Activated CD8-positive, alpha-beta memory T cell treated with anti-CD3 and anti-CD28 coated beads, Interleukin-2, amount 10 ng/mL, durations not matched to agents 7 days and 5 days (primary cell): ENCODE measurements at regions of chr5 and their contacts with region 1.

Region 1: DNA sequence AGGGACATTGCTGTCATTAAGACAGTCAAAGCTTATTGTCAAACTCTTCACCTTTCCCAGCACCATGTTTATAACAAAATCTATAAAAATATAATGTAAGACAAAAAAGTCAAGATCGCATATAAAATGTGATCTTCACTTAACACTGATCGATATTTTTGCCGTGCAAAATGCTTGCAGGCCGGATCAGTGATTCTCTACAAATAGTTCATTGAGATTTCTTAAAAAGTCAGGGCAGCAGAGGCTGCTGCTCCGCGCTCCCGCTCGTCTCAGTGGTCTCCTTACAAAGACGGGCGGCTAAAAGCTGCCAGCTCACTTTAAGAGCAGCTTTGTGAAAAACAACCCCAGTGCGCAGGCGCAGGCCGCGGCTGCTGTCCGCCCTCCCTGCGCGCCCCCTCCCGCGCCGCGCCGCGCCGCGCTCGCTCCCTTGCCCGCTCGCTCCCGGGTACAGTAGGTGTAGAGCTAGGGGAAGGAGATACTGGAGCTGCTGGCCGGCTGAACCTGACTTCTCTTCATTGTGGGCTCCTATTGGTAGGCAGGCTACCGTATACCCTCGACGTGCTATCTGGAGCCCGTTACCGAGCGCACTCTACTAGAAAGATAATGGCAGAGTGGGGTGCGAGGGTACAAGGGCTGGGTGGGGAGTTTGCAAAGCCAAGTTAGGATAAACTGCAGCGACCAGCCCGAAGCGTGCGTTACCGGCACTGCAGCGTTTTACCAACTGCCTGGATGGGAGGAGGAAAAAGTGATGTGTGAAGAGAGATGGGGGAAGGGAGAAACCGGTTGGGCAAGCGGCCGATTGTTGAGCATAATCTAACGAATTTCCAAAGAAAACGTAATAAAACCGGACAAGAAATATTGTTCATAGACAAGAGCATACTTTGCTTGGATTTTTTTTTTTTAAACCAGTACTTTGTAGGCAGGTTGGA is at the start of gene ARRDC3:
- DNase-seq: peak; percentile 98
- ATAC-seq: peak; percentile 61
- H3K4me3 Mint-ChIP-seq: peak within 1 kb of the TSS; percentile 88
- H3K27ac Mint-ChIP-seq: peak within 1 kb of the TSS; percentile 100
- H3K4me1 Mint-ChIP-seq: peaks cover 24% of the 10 kb centered on the region
- H3K27me3 Mint-ChIP-seq: no peaks in the 10 kb centered on the region
- total RNA-seq, gene ARRDC3: 13.5 to 42.8 TPM

Region 2: DNA sequence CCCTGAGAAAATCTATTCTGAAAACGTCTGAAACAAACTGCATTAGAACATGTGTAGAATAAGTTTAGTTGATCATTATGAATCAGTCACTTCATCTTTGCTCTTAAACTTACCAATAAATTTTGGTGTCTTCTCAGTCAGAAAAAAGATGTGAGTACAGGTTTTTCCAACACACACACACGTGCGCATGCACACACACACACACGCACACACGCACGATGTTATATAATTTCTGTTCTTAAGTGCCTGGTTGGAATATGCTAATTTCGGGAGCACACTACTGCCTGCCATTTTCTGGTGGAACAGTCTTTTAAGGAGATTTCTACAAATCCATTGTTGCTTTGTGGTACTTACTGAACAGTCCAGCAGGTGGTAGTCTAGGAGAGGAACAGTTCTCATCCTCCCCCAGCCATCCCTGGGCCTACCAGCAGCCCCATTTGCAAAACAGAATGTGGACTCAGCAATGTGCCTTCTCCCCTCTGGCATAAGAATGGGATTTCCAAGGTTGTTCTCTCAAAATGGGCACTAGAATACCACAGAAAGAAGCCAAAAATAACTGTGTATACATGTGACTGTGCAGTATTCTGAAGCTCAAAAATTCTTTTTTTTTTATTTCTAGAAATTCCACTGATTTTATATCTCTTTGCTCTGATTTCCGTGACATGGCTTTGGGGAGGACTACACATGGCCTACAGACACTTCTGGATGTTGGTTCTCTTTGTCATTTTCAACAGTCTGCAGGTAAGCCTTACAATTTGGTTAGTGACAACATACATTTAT is 281.5 kb before region 1 on chr5:
- CTCF ChIA-PET with region 1: interaction called, 21 read pairs
- DNase-seq: peak; percentile 71
- ATAC-seq: peak; percentile 94
- H3K4me3 Mint-ChIP-seq: no peak overlapping the region
- H3K27ac Mint-ChIP-seq: no peak overlapping the region
- H3K4me1 Mint-ChIP-seq: no peaks in the 10 kb centered on the region
- H3K27me3 Mint-ChIP-seq: peaks cover 20% of the 10 kb centered on the region

Region 3: DNA sequence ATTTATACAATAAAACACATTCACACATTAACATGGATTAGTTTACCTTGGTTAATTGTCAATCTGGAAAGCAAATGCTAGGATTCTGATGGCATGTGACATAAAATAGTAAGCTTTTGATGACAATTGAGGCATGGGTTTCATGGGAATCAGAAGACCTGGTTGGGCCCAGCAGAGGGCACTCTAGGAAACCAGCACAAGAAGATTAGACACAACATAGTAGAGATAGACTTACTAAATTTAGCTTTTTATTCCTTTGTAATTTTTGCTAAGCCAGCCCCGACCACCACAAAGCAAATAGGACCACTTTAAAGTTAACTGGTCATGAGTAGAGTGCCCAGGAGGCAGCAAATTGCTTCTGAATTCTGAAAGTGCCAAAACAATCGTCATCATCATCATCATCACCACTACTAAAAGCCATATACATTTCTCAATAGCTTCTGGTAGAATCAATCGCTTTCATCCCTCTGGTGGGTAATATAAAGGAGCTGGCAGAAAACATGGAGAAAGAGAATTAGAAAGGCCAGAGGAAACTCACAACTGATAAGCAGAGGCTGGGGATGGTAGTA is 163.4 kb before region 1 on chr5:
- CTCF ChIA-PET with region 1: interaction called, 163 read pairs
- DNase-seq: peak; percentile 44
- ATAC-seq: peak; percentile 60
- H3K4me3 Mint-ChIP-seq: no peak overlapping the region
- H3K27ac Mint-ChIP-seq: no peak overlapping the region
- H3K4me1 Mint-ChIP-seq: no peaks in the 10 kb centered on the region
- H3K27me3 Mint-ChIP-seq: peaks cover 9% of the 10 kb centered on the region

Region 4: GRCh38 chr5:91245871-91246270 is 137.4 kb before region 1 on chr5:
- CTCF ChIA-PET with region 1: interaction called, 28 read pairs
- DNase-seq: no peak
- ATAC-seq: no peak
- H3K4me3 Mint-ChIP-seq: no peak overlapping the region
- H3K27ac Mint-ChIP-seq: no peak overlapping the region
- H3K4me1 Mint-ChIP-seq: no peaks in the 10 kb centered on the region
- H3K27me3 Mint-ChIP-seq: peaks cover 4% of the 10 kb centered on the region

Region 5: DNA sequence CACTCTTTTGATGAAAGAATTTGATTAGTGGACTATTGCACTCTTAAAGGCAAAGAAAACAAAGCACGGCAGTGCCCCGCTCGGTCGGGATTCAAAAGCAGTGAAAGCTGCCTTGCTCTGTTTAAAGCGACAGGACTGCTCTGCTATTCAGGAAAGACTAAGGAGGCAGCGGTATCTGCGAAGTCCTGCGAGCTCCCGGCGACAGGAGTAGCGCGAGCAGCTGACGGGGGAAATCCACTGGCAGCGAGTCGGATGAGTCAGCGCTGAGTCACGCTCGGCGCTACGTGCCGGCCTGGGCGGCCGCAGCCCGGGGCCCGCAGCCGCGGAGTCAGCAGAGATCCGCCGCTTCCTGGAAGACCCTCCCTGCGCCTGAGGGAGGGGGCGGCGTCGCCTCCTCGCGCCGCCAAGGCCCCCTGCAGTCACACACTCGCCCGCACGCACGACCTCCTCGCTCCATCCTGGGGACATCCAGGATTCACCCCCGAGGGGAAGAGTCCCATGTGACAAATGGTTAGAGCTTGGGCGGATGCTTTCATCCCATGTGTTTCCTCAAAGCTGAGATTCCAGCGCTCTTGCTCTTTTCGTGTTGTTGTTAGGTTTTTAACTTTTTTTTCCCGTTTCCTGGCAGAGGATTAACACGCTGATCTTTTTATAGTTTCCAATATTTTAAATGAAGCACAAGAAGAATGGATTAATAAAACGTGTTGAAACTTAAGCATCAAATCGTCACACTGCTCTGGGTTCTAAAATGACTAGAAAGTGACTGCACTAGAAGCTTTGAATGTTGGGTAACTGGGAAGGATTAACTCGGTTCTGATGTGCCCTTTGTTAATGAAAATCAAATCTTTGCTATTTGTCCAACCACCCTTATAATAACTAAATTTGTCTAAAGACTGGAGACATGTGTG is 102.7 kb before region 1 on chr5:
- CTCF ChIA-PET with region 1: interaction called, 28 read pairs
- DNase-seq: peak; percentile 92
- ATAC-seq: peak; percentile 96
- H3K4me3 Mint-ChIP-seq: peak overlapping the region; percentile 83
- H3K27ac Mint-ChIP-seq: peak overlapping the region; percentile 96
- H3K4me1 Mint-ChIP-seq: peaks cover 27% of the 10 kb centered on the region
- H3K27me3 Mint-ChIP-seq: peaks cover 5% of the 10 kb centered on the region

Region 6: DNA sequence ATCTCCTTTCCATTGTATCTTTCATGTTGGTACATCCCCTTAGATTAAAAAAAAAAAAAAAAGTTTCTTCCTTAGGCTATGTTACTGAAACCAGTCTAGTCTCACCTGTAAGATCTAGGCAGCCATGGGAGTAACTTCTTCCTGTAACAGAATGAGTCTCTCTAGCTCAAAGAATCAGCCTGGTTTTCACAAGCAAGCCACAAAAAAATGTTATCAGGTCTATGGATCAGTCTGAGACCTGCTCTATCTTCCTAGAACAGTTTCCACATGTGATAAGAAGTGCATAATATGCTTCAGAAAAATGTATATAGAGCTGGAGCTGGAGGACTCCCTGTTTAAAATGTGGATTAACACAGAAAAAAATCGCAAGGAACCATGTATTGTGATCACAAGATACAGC is 54.0 kb before region 1 on chr5:
- CTCF ChIA-PET with region 1: interaction called, 11 read pairs
- DNase-seq: no peak
- ATAC-seq: peak; percentile 66
- H3K4me3 Mint-ChIP-seq: no peak overlapping the region
- H3K27ac Mint-ChIP-seq: no peak overlapping the region
- H3K4me1 Mint-ChIP-seq: peaks cover 34% of the 10 kb centered on the region
- H3K27me3 Mint-ChIP-seq: peaks cover 8% of the 10 kb centered on the region

Region 7: DNA sequence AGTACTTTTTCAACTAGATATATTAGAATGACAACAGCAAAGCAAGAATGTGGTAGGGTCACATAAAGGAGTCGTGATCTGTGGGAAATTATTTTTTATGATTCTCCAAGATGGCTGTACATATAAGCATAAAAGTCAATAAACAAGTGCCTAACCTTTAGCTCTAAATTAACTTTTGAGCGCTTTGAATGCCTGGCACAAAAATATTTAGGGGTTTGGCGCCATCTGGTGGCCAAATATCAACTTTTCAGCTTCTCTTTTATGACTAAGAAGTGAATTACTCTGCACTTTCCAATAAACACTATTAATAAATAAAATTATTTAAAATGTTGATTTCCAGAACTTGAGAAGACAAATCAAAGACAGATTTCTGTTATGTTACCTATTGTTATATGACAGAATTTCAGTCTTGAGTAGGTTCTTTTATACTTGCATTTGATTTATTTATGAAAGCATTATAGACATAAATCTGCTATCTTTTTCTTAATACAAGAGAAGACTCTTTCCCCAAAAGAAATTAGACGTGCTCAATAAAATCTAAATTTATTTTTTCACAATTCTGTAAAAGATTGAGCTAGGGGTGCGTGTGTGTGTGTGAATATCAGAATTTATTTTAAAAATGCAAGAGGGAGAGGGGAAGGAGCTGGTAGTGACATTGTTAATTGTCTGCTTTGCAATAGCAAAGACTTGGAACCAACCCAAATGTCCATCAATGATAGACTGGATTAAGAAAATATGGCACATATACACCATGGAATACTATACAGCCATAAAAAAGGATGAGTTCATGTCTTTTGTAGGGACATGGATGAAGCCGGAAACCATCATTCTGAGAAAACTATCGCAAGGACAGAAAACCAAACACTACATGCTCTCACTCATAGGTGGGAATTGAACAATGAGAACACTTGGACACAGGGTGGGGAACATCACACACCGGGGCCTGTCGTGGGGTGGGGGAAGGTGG is 36.6 kb after region 1 on chr5:
- CTCF ChIA-PET with region 1: interaction called, 97 read pairs
- DNase-seq: peak; percentile 80
- ATAC-seq: peak; percentile 63
- H3K4me3 Mint-ChIP-seq: no peak overlapping the region
- H3K27ac Mint-ChIP-seq: no peak overlapping the region
- H3K4me1 Mint-ChIP-seq: peaks cover 14% of the 10 kb centered on the region
- H3K27me3 Mint-ChIP-seq: peaks cover 2% of the 10 kb centered on the region

Region 8: DNA sequence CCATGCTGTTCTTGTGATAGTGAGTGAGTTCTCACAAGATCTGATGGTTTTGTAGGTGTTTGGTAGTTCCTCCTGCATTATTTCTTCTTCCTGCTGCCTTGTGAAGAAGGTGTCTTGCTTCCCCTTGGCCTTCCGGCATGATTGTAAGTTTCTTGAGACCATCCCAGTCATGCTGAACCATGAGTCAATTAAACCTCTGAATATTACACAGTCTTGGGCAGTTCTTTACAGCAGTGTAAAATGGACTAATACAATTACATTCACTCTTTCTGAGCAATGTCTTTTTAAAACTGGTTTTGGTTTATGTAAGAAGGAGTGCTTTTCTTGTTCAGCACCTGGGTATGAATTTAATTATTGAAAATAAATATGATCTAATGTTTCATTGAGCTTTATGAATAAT is 50.6 kb after region 1 on chr5:
- CTCF ChIA-PET with region 1: no interaction called
- DNase-seq: no peak
- ATAC-seq: no peak
- H3K4me3 Mint-ChIP-seq: no peak overlapping the region
- H3K27ac Mint-ChIP-seq: no peak overlapping the region
- H3K4me1 Mint-ChIP-seq: peaks cover 13% of the 10 kb centered on the region
- H3K27me3 Mint-ChIP-seq: no peaks in the 10 kb centered on the region